Colonic mucosa (tissue), 4 donors: ENCODE measurements at regions of chr12 and their contacts with region 1.

Region 1: GRCh38 chr12:27332407-27333301 is at the start of gene BMAL2:
- DNase-seq: peak; percentile 41
- H3K4me3 ChIP-seq: peak within 1 kb of the TSS; percentile 72
- H3K27ac ChIP-seq: peak within 1 kb of the TSS; percentile 10
- H3K4me1 ChIP-seq: no peaks in the 10 kb centered on the region
- H3K27me3 ChIP-seq: no peaks in the 10 kb centered on the region
- CTCF ChIP-seq: no peak
- total RNA-seq, gene BMAL2: 7.0 to 14.9 TPM

Region 2: GRCh38 chr12:27083861-27084394 is 248.7 kb before region 1 on chr12:
- intact Hi-C with region 1: no loop called
- DNase-seq: no peak
- H3K4me3 ChIP-seq: no peak overlapping the region
- H3K27ac ChIP-seq: no peak overlapping the region
- H3K4me1 ChIP-seq: no peaks in the 10 kb centered on the region
- H3K27me3 ChIP-seq: no peaks in the 10 kb centered on the region
- CTCF ChIP-seq: no peak

Region 3: GRCh38 chr12:27383429-27384260 is 51.0 kb after region 1 on chr12:
- intact Hi-C with region 1: loop called (anchors 10 kb)
- DNase-seq: peak; percentile 83
- H3K4me3 ChIP-seq: no peak overlapping the region
- H3K27ac ChIP-seq: no peak overlapping the region
- H3K4me1 ChIP-seq: no peaks in the 10 kb centered on the region
- H3K27me3 ChIP-seq: no peaks in the 10 kb centered on the region
- CTCF ChIP-seq: peak; percentile 94